Endothelial cell of umbilical vein (primary cell): ENCODE measurements at regions of chr2 and their contacts with region 1.

Region 1: GRCh38 chr2:189674374-189675112 is at the start of gene ANKAR:
- DNase-seq: peak; percentile 95
- H3K4me3 ChIP-seq: peak within 1 kb of the TSS; percentile 54 to 92 (median 92)
- H3K27ac ChIP-seq: peak within 1 kb of the TSS; percentile 95
- H3K4me1 ChIP-seq: peaks cover 14% of the 10 kb centered on the region
- H3K27me3 ChIP-seq: no peaks in the 10 kb centered on the region
- CTCF ChIP-seq: peak; percentile 91 to 99
- POLR2A ChIP-seq: peak; percentile 95
- total RNA-seq, gene ANKAR: 4.3 and 4.5 TPM in 2 replicates

Region 2: GRCh38 chr2:189318761-189319160 is 355.8 kb before region 1 on chr2:
- CTCF ChIA-PET with region 1: no interaction called
- POLR2A ChIA-PET with region 1: no interaction called
- dilution Hi-C with region 1: no loop called
- intact Hi-C with region 1: no loop called
- DNase-seq: no peak
- H3K4me3 ChIP-seq: no peak overlapping the region
- H3K27ac ChIP-seq: no peak overlapping the region
- H3K4me1 ChIP-seq: no peaks in the 10 kb centered on the region
- H3K27me3 ChIP-seq: no peaks in the 10 kb centered on the region
- CTCF ChIP-seq: no peak
- POLR2A ChIP-seq: no peak

Region 3: GRCh38 chr2:189549449-189549832 is 125.1 kb before region 1 on chr2:
- CTCF ChIA-PET with region 1: no interaction called
- POLR2A ChIA-PET with region 1: no interaction called
- dilution Hi-C with region 1: no loop called
- intact Hi-C with region 1: no loop called
- DNase-seq: peak; percentile 87
- H3K4me3 ChIP-seq: no peak overlapping the region
- H3K27ac ChIP-seq: no peak overlapping the region
- H3K4me1 ChIP-seq: no peaks in the 10 kb centered on the region
- H3K27me3 ChIP-seq: no peaks in the 10 kb centered on the region
- CTCF ChIP-seq: no peak
- POLR2A ChIP-seq: no peak

Region 4: DNA sequence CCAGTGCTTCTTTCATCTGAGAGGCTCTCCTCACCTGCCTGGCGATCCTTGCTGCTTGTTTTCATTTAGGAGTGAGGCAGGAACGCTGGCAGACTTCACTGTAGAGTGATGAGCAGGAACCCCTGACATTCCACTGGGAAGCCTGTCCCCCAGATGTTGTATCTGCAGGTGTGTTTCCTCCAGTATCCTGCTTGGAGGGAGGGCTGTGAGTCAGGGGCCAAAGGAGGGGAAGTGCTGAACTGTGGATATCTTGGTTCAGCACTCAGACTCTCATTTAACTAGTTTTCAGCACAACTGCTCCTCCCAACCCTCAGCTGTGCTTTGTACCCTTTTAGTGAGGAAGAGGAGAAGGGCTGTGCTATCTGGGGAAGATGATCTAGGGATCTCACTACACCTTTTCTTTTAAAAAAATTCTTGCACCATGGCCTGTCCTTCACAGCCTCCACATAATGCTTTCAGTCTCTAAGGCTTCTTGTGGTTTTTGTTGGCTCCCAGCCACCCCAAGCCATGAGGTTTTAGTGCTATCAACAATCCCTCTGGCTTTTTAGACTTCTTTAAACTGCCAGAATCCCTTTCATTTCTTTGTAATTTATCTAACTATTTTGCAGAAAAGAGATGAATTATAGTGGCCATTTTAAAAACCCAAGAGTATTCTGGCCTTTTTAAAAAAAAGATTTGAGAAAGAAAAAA is 11.1 kb after region 1 on chr2:
- CTCF ChIA-PET with region 1: interaction called, 16 read pairs
- POLR2A ChIA-PET with region 1: no interaction called
- dilution Hi-C with region 1: no loop called
- intact Hi-C with region 1: loop called (anchors 1 kb)
- DNase-seq: peak; percentile 59
- H3K4me3 ChIP-seq: no peak overlapping the region
- H3K27ac ChIP-seq: no peak overlapping the region
- H3K4me1 ChIP-seq: peaks cover 10% of the 10 kb centered on the region
- H3K27me3 ChIP-seq: no peaks in the 10 kb centered on the region
- CTCF ChIP-seq: no peak
- POLR2A ChIP-seq: no peak

Region 5: GRCh38 chr2:189698020-189698887 is 23.7 kb after region 1 on chr2:
- CTCF ChIA-PET with region 1: interaction called, 22 read pairs
- POLR2A ChIA-PET with region 1: no interaction called
- dilution Hi-C with region 1: no loop called
- intact Hi-C with region 1: loop called (anchors 1 kb)
- DNase-seq: peak; percentile 60
- H3K4me3 ChIP-seq: no peak overlapping the region
- H3K27ac ChIP-seq: no peak overlapping the region
- H3K4me1 ChIP-seq: no peaks in the 10 kb centered on the region
- H3K27me3 ChIP-seq: no peaks in the 10 kb centered on the region
- CTCF ChIP-seq: peak; percentile 13 to 33
- POLR2A ChIP-seq: no peak

Region 6: DNA sequence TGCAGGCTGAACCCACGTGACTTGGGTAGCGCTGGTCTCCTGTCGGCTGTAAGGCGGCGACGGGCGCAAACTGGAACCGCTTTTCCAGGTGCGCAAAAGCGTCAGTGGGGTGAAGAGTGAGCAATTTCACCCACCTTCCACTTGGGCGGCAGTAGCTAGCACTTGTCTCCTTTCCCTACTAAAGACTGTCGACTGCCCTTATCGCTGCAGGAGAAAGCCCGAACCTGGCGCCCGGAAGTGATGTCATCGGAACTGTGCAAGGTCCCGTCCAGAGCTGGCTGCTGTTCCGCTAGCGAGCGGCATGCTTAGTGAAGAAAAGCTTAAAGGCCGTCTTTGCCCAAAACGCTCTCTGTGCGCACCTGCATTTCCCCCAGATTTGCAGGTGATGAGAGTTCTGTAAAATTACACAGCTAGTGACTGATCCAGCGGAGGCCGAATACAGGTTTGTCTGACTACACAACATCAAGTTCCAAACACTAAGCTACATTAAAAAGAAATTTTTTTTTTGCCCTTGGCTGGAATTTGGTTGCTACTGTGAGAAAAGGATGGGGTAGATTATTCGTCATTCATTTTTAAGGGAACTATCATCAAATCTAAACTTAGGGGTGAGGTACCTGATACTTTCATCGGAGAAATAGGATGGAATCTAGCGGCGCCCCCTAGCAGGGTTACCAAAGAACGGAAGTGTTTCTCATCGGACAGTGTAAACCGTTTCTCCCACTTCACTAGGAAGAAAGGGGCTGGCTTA is 88.2 kb after region 1 on chr2 and contains the start of gene OSGEPL1:
- CTCF ChIA-PET with region 1: interaction called, 16 read pairs
- POLR2A ChIA-PET with region 1: no interaction called
- dilution Hi-C with region 1: no loop called
- intact Hi-C with region 1: loop called (anchors 1 kb)
- DNase-seq: peak; percentile 93
- H3K4me3 ChIP-seq: peak within 1 kb of the TSS; percentile 85 to 97 (median 85)
- H3K27ac ChIP-seq: peak within 1 kb of the TSS; percentile 75
- H3K4me1 ChIP-seq: peaks cover 11% of the 10 kb centered on the region
- H3K27me3 ChIP-seq: no peaks in the 10 kb centered on the region
- CTCF ChIP-seq: peak; percentile 45 to 49
- POLR2A ChIP-seq: peak; percentile 53
- total RNA-seq, gene OSGEPL1: 5.4 and 5.9 TPM in 2 replicates

Region 7: GRCh38 chr2:189783927-189784867 is 109.7 kb after region 1 on chr2 and contains the starts of genes ORMDL1 and PMS1:
- CTCF ChIA-PET with region 1: no interaction called
- POLR2A ChIA-PET with region 1: no interaction called
- dilution Hi-C with region 1: no loop called
- intact Hi-C with region 1: loop called (anchors 1 kb)
- DNase-seq: peak; percentile 98
- H3K4me3 ChIP-seq: peak within 1 kb of the TSS; percentile 73 to 95 (median 87)
- H3K27ac ChIP-seq: peak within 1 kb of the TSS; percentile 71
- H3K4me1 ChIP-seq: peaks cover 16% of the 10 kb centered on the region
- H3K27me3 ChIP-seq: no peaks in the 10 kb centered on the region
- CTCF ChIP-seq: no peak
- POLR2A ChIP-seq: peak; percentile 92
- total RNA-seq, gene ORMDL1: 58.0 and 63.3 TPM in 2 replicates
- total RNA-seq, gene PMS1: 27.8 and 28.4 TPM in 2 replicates